Panc1 (cell line): ENCODE measurements at regions of chr1 and their contacts with region 1.

Region 1: GRCh38 chr1:208652296-208653160 is 408.3 kb upstream of the PLXNA2 start:
- DNase-seq: peak; percentile 45
- ATAC-seq: peak; percentile 82
- H3K4me3 ChIP-seq: no peak overlapping the region
- H3K27ac ChIP-seq: no peak overlapping the region
- H3K4me1 ChIP-seq: no peaks in the 10 kb centered on the region; the same call in 1 of the 2 replicates
- H3K27me3 ChIP-seq: no peaks in the 10 kb centered on the region
- CTCF ChIP-seq: peak; percentile 88

Region 2: GRCh38 chr1:208880433-208881100 is 228.0 kb after region 1 on chr1:
- CTCF ChIA-PET with region 1: no interaction called
- POLR2A ChIA-PET with region 1: no interaction called
- in situ Hi-C with region 1: no loop called
- intact Hi-C with region 1: no loop called
- DNase-seq: no peak
- ATAC-seq: no peak
- H3K4me3 ChIP-seq: no peak overlapping the region
- H3K27ac ChIP-seq: no peak overlapping the region
- H3K4me1 ChIP-seq: no peaks in the 10 kb centered on the region
- H3K27me3 ChIP-seq: no peaks in the 10 kb centered on the region
- CTCF ChIP-seq: no peak

Region 3: DNA sequence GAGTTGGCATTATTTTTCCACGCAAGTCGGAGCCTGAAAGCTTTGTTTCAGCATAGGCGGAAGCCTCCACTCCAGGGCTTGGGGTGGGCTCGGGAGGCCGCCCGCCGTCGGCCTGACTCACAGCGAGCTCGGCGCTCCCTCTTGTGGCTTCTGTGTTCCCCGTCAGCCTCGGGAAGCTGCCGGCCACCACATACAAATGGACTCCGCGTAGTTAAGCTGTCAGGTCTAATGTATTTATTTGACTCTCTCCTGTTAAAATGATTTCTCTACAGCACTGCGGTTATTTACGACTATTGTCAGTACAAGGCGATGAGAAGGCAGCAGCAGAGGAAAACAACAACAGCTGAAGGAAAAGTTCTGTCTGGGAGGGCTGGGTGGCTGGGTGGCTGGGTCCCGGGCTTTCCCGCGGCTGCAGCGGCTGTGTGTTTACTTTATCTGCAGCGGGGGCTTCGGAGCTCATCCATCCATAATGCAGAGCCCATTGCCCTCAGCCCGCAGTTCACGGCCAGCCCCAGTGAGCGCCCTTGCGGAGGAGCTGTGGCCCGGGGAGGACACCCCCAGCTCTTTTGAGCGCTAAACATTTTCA is 555.3 kb after region 1 on chr1:
- CTCF ChIA-PET with region 1: interaction called, 6 read pairs
- POLR2A ChIA-PET with region 1: no interaction called
- in situ Hi-C with region 1: no loop called
- intact Hi-C with region 1: loop called (anchors 5 kb)
- DNase-seq: no peak
- ATAC-seq: peak; percentile 92
- H3K4me3 ChIP-seq: peak overlapping the region in 1 of 2 experiments; percentile 11; a peak in 1 of 4 replicates
- H3K27ac ChIP-seq: no peak overlapping the region
- H3K4me1 ChIP-seq: no peaks in the 10 kb centered on the region
- H3K27me3 ChIP-seq: peaks cover 14% of the 10 kb centered on the region; the same call in 1 of the 2 replicates
- CTCF ChIP-seq: peak; percentile 90